Breast epithelium (tissue), 4 donors: ENCODE measurements at regions of chr7 and their contacts with region 1.

Region 1: DNA sequence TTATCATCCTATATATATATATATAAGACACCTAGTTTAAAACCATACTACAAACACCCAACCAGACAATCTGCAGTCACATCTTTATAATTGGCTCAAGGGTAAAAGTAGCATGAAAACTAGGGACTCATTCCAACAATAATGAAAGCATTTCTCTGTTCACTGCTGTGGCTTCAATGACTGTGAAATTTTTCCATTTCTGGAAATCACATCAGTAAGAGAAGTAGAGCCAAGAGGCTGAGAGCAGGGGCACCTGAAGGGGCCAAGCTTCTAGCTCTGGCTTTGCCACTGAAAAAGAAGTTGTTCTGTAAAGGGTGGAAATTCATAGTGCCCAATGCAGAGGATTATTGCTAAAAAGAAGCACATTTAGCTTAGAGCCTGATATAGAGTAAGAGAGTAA is 158.6 kb upstream of the GLI3 start:
- DNase-seq: no peak
- H3K4me3 ChIP-seq: no peak overlapping the region
- H3K27ac ChIP-seq: no peak overlapping the region
- H3K4me1 ChIP-seq: no peaks in the 10 kb centered on the region
- H3K27me3 ChIP-seq: no peaks in the 10 kb centered on the region
- CTCF ChIP-seq: no peak
- POLR2A ChIP-seq: no peak

Region 2: GRCh38 chr7:41969561-41970105 is 426.0 kb before region 1 on chr7:
- intact Hi-C with region 1: loop called (anchors 5 kb)
- DNase-seq: no peak
- H3K4me3 ChIP-seq: no peak overlapping the region
- H3K27ac ChIP-seq: no peak overlapping the region
- H3K4me1 ChIP-seq: no peaks in the 10 kb centered on the region
- H3K27me3 ChIP-seq: no peaks in the 10 kb centered on the region
- CTCF ChIP-seq: no peak
- POLR2A ChIP-seq: no peak

Region 3: GRCh38 chr7:42372479-42372878 is 23.1 kb before region 1 on chr7:
- intact Hi-C with region 1: no loop called
- DNase-seq: no peak
- H3K4me3 ChIP-seq: no peak overlapping the region
- H3K27ac ChIP-seq: no peak overlapping the region
- H3K4me1 ChIP-seq: no peaks in the 10 kb centered on the region
- H3K27me3 ChIP-seq: no peaks in the 10 kb centered on the region
- CTCF ChIP-seq: no peak
- POLR2A ChIP-seq: no peak

Region 4: GRCh38 chr7:42453931-42454361 is 58.3 kb after region 1 on chr7:
- intact Hi-C with region 1: no loop called
- DNase-seq: no peak
- H3K4me3 ChIP-seq: no peak overlapping the region
- H3K27ac ChIP-seq: no peak overlapping the region
- H3K4me1 ChIP-seq: no peaks in the 10 kb centered on the region
- H3K27me3 ChIP-seq: no peaks in the 10 kb centered on the region
- CTCF ChIP-seq: no peak
- POLR2A ChIP-seq: no peak